Astrocyte of the cerebellum (primary cell): ENCODE measurements at regions of chr15 and their contacts with region 1.

Region 1: DNA sequence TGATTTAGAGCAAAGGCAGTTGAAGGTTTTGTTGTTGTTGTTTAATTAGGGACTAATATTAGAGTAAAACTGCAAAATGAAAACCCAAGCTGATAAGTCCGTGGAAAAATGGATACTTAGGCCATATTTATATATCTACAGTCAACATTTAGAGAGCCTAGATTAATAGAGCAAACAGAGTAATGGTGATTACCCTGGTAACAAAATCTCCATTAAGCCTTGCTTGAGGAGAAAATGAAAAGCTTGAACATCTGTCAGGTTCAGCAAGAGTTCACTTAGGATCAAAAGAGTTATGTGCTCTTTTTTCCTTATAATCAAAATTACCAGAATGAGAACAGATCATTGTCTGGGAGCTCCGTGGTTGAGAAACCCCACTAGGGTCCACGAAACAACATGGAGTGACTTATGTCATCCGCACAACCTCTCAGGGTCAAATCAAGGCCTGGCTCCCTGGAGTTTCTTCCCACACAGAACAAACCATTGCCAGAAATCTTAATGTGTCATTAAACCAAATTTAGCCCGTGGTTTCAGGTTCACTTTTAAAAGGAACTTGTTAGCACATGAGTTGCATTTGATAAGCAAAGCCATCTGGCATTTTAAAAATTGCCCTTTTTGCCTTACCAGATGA is 381.2 kb downstream of the GABRB3 start:
- DNase-seq: no peak
- H3K4me3 ChIP-seq: no peak overlapping the region
- CTCF ChIP-seq: no peak

Region 2: DNA sequence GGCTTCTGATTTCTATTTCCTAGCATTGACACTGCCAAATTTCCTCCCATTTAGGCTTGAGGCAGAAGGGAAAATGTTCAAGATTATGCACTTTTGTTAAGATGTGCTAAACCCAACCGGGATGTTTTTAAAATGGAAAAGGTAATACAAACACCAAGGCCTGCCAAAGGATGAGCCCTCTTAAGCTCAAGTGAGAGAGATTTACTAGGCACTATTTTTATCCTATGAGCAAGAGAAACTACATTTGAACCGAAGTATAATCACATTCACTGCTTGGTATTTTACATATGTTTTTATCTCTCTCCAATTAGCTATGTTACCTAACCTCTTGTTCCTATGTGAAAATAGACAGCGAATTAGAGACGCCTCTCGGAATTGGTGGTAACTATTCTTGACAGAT is 85.4 kb after region 1 on chr15:
- in situ Hi-C with region 1: no loop called
- DNase-seq: no peak
- H3K4me3 ChIP-seq: no peak overlapping the region
- CTCF ChIP-seq: no peak

Region 3: DNA sequence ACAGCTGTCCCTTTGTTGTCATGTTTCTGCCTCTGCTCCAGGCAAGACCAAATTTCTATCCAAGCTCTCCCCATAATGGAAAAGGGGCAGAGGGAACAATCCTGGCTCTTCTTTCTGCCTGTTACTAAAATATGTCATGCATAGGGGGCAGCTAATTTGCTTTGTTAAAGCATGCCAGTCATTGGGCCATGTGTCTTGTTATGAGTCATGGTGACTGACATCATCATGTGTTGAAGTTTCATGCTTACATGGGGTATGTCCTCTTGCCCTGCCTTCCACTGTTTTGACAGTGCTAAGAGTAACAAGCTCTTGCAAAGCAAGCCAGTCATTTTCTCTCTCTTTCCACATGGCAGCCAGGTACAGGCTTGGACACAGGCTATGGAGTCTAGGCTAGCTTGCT is 112.3 kb after region 1 on chr15:
- in situ Hi-C with region 1: loop called (anchors 25 kb)
- DNase-seq: no peak
- H3K4me3 ChIP-seq: no peak overlapping the region
- CTCF ChIP-seq: no peak